ENCODE measurements at regions of chr19 and their contacts with region 1.

Region 1: GRCh38 chr19:54390942-54391577 is 24.2 kb upstream of the TTYH1 start:
- DNase-seq: peak in 2 of 3 donors; percentile 63 to 67
- H3K4me3 ChIP-seq: no peak overlapping the region
- H3K4me3 Mint-ChIP-seq: no peak overlapping the region
- H3K27ac ChIP-seq: peak overlapping the region in 1 of 2 donors; percentile 22
- H3K27ac Mint-ChIP-seq: peak overlapping the region in 5 of 7 donors; percentile 52 to 81 (median 76)
- H3K4me1 ChIP-seq: peaks cover 48 to 57% of the 10 kb centered on the region in 2 donors
- H3K4me1 Mint-ChIP-seq: peaks cover 48% of the 10 kb centered on the region
- H3K27me3 ChIP-seq: no peaks in the 10 kb centered on the region
- H3K27me3 Mint-ChIP-seq: peaks cover 0 to 14% (median 0%) of the 10 kb centered on the region in 3 donors
- CTCF ChIP-seq: peak; percentile 91

Region 2: DNA sequence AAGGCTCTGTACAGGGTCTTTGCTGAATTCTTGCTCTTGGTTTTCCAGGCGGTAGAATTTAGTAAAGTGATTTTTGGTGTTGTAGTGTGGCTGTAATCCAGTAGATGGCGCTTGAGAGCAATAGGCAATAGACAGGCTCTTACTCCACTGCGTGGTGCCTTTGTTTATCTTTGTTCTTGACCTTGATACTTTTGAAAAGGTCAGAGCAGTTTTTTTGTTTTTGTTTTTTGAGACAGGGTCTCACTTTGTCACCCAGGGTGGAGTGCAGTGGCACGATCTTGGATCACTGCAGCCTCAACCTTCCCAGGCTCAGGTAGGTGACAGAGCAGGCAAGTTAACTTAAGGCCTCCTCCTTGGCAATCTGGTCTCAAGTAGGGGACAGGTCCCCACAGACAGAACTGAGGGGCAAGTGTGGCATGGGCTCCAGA is 65.9 kb before region 1 on chr19:
- intact Hi-C with region 1: loop called in 1 of 2 experiments (anchors 10 kb)
- DNase-seq: peak; percentile 55 to 72 (median 63)
- H3K4me3 ChIP-seq: no peak overlapping the region
- H3K4me3 Mint-ChIP-seq: peak overlapping the region in 1 of 2 donors; percentile 30
- H3K27ac ChIP-seq: no peak overlapping the region
- H3K27ac Mint-ChIP-seq: peak overlapping the region in 2 of 7 donors; percentile 57 to 68
- H3K4me1 ChIP-seq: peaks cover 12 to 21% of the 10 kb centered on the region in 2 donors
- H3K4me1 Mint-ChIP-seq: peaks cover 23% of the 10 kb centered on the region
- H3K27me3 ChIP-seq: no peaks in the 10 kb centered on the region
- H3K27me3 Mint-ChIP-seq: peaks cover 3% of the 10 kb centered on the region in 3 donors
- CTCF ChIP-seq: peak; percentile 95

Region 3: GRCh38 chr19:54352041-54352440 is 39.0 kb before region 1 on chr19:
- intact Hi-C with region 1: loop called (anchors 5 kb)
- DNase-seq: no peak
- H3K4me3 ChIP-seq: peak overlapping the region in 1 of 3 experiments; percentile 8
- H3K4me3 Mint-ChIP-seq: no peak overlapping the region
- H3K27ac ChIP-seq: peak overlapping the region; percentile 24 to 44
- H3K27ac Mint-ChIP-seq: peak overlapping the region in 5 of 7 donors; percentile 24 to 77 (median 56)
- H3K4me1 ChIP-seq: peaks cover 27 to 32% of the 10 kb centered on the region in 2 donors
- H3K4me1 Mint-ChIP-seq: peaks cover 46% of the 10 kb centered on the region
- H3K27me3 ChIP-seq: peaks cover 0 to 2% of the 10 kb centered on the region in 2 donors
- H3K27me3 Mint-ChIP-seq: peaks cover 6 to 9% (median 8%) of the 10 kb centered on the region in 3 donors
- CTCF ChIP-seq: no peak

Region 4: DNA sequence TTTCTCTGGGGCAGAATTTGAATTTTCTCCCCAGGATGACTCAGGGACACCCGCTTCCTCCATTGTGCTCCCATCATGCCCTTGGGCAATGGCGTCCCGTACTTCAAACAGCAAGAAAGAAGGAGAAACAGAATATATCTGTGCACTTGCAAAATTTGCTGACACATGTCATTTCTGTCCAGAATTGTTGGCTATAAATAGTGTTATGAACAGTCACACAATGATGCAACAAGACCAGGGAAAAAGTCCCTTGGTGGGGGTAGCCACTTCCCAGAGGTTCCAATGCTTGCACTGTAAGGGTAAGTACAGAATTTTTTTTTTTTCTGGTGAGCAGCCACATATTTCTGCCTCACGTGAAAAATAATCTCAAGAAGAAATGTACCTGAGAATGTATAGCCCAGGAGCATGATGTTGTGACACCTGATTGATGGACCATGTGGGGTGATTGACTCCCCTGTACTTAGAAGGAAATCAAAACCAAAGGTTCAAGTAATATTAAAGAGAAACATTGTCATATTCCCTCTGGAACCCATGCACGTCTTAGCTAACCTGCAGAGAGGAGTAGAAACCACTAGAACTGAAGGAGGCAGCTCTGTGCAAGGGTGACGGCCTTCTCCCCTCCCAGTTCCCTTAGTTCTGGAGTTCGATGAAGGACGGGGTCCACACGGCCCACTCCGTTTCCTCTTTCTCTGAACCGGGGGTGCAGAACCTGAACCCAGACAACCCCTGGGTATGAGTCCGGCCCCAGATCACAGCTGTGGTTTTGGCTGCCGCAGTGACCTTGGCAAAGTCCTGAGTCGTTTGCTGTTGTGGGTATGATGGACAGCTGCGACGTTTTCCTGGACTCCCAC is 17.1 kb before region 1 on chr19:
- intact Hi-C with region 1: loop called in 1 of 2 experiments (anchors 2 kb)
- DNase-seq: peak; percentile 96 to 99 (median 98)
- H3K4me3 ChIP-seq: peak overlapping the region in 1 of 3 experiments; percentile 58
- H3K4me3 Mint-ChIP-seq: peak overlapping the region; percentile 71 to 74
- H3K27ac ChIP-seq: peak overlapping the region; percentile 93 to 98
- H3K27ac Mint-ChIP-seq: peak overlapping the region; percentile 96 to 99 (median 98)
- H3K4me1 ChIP-seq: peaks cover 91 to 96% of the 10 kb centered on the region in 2 donors
- H3K4me1 Mint-ChIP-seq: peaks cover 82% of the 10 kb centered on the region
- H3K27me3 ChIP-seq: no peaks in the 10 kb centered on the region
- H3K27me3 Mint-ChIP-seq: peaks cover 0 to 4% (median 0%) of the 10 kb centered on the region in 3 donors
- CTCF ChIP-seq: no peak

Region 5: DNA sequence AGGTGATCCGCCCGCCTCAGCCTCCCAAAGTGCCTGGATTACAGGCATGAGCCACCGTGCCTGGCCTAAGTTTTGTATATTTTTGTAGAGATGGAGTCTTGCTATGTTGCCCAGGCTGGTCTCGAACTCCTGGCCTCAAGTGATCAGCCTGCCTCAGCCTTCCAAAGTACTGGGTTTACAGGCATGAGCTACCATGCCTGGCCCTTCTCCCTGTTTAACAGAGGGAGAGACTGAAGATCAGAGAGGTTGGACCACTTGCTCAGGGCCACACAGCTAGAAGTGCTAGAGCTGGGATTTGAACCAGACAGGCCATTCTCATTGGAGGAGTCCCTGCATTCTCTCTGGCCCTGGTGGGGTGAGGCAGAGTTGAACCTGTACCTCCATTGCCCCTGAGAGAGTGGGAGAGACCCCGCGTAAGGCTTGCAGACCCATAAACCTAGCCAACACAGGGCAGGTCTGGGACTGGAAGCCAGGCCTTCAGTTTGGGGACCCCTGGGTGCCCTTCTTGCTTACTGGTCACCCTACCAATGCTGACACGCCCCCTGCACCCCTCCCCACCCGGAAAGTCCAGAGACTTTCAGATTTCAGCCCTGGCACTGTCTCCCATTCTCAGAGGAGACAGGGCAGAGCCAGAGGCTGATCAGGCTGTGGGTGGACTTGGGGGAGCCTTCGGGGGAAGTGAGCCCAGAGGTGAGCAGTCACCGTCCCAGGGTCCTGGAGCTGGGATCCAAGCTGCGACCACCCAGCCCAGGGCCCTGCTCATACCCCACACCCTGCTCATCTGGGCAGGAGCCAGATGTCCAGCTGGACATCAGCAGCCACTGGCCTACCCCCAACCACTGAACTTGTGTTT is 37.5 kb after region 1 on chr19:
- intact Hi-C with region 1: no loop called
- DNase-seq: no peak
- H3K4me3 ChIP-seq: no peak overlapping the region
- H3K4me3 Mint-ChIP-seq: peak overlapping the region in 1 of 2 donors; percentile 46
- H3K27ac ChIP-seq: no peak overlapping the region
- H3K27ac Mint-ChIP-seq: no peak overlapping the region
- H3K4me1 ChIP-seq: peaks cover 3 to 10% of the 10 kb centered on the region in 2 donors
- H3K4me1 Mint-ChIP-seq: peaks cover 3% of the 10 kb centered on the region
- H3K27me3 ChIP-seq: peaks cover 2 to 40% of the 10 kb centered on the region in 2 donors
- H3K27me3 Mint-ChIP-seq: peaks cover 36 to 77% (median 61%) of the 10 kb centered on the region in 3 donors
- CTCF ChIP-seq: no peak

Region 6: DNA sequence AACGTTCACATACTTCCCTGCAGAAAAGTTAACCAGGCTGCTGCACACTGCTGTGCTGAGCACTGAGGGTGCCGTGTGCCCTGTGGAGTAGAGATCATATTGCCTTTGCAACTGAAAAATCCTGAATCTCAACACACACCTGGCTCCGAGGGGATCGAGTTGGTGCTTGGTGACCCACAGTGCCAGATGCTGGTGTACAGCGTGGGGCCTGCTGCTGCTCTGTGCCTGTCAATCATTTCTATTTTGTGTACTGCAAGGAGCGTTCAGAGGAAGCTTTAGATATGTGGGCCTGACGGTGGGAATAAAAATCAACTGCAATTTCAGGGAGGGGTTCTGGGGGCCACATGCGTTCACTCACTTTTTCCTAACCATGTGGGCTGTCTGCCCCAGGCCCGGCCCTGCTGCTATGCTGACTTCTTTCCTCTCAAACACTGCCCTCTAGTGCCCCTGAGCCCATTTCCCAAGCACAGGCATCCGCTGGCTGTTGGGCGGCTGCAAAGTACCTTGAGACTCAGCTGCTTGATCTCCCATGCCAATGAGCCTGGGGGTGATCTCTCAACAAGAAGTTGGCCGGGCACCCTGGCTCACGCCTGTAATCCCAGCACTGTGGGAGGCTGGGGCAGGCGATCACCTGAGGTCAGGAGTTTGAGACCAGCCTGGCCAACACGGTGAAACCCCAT is 48.3 kb after region 1 on chr19:
- intact Hi-C with region 1: no loop called
- DNase-seq: no peak
- H3K4me3 ChIP-seq: no peak overlapping the region
- H3K4me3 Mint-ChIP-seq: no peak overlapping the region
- H3K27ac ChIP-seq: no peak overlapping the region
- H3K27ac Mint-ChIP-seq: no peak overlapping the region
- H3K4me1 ChIP-seq: peaks cover 0 to 6% of the 10 kb centered on the region in 2 donors
- H3K4me1 Mint-ChIP-seq: peaks cover 4% of the 10 kb centered on the region
- H3K27me3 ChIP-seq: peaks cover 0 to 3% of the 10 kb centered on the region in 2 donors
- H3K27me3 Mint-ChIP-seq: peaks cover 0 to 8% (median 0%) of the 10 kb centered on the region in 3 donors
- CTCF ChIP-seq: peak; percentile 24

Measured in CD14-positive monocyte (primary cell).